Naive thymus-derived CD4-positive, alpha-beta T cell (primary cell): ENCODE measurements at regions of chr17 and their contacts with region 1.

Region 1: DNA sequence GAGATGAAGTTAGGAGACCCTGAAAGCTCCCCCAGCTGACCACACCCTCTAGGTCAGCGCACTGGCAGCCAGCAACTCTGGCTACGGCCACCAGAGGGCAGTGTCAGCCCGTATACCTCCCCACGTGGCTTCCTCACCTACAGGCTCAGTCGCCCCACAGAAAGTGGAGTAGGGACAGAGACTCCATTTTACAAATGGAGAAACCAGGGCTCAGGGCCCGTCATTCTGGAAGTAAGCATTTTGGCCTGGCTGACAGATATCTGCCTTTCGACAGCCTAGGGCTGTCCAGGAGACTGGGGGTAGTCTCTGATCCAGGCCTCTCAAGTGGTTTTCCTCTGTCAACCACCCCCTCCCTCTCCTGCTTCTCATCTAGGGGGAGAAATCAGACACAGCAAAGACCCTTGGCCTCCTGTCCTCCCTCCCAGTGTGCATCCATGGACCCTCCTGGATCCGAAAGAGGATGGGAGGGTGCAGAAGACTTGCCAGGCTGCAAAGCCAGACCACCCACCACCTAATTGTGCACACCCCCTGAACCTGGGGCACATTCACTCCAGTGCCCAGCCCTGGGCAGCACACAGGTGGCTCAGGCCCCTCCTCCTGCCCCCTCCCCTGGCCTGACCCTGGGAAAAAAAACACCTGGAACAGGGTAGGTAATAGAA is 3.8 kb upstream of the HAP1 start:
- DNase-seq: peak; percentile 61 to 83 (median 74)
- ATAC-seq: peak; percentile 97
- H3K4me3 ChIP-seq: no peak overlapping the region
- H3K4me3 Mint-ChIP-seq: no peak overlapping the region
- H3K27ac ChIP-seq: no peak overlapping the region
- H3K27ac Mint-ChIP-seq: peak overlapping the region in 1 of 9 donors; percentile 39
- H3K4me1 ChIP-seq: peaks cover 0 to 13% of the 10 kb centered on the region in 2 donors
- H3K4me1 Mint-ChIP-seq: peaks cover 4 to 12% (median 7%) of the 10 kb centered on the region in 7 donors
- H3K27me3 ChIP-seq: peaks cover 3 to 7% of the 10 kb centered on the region in 2 donors
- H3K27me3 Mint-ChIP-seq: peaks cover 32 to 38% (median 38%) of the 10 kb centered on the region in 5 donors

Region 2: GRCh38 chr17:41786227-41787020 is 48.2 kb after region 1 on chr17 and contains the start of gene JUP:
- CTCF ChIA-PET with region 1: interaction called, 6 read pairs
- POLR2A ChIA-PET with region 1: no interaction called
- intact Hi-C with region 1: loop called (anchors 1 kb)
- DNase-seq: peak; percentile 84 to 91 (median 89)
- ATAC-seq: peak; percentile 97
- H3K4me3 ChIP-seq: peak within 1 kb of the TSS; percentile 44
- H3K4me3 Mint-ChIP-seq: peak within 1 kb of the TSS; percentile 61 to 85 (median 82)
- H3K27ac ChIP-seq: no peak within 1 kb of the TSS
- H3K27ac Mint-ChIP-seq: peak within 1 kb of the TSS in 4 of 9 donors; percentile 1 to 70 (median 48)
- H3K4me1 ChIP-seq: peaks cover 0 to 11% of the 10 kb centered on the region in 2 donors
- H3K4me1 Mint-ChIP-seq: peaks cover 13 to 45% (median 30%) of the 10 kb centered on the region in 7 donors
- H3K27me3 ChIP-seq: peaks cover 0 to 6% of the 10 kb centered on the region in 2 donors
- H3K27me3 Mint-ChIP-seq: peaks cover 16 to 51% (median 20%) of the 10 kb centered on the region in 5 donors
- total RNA-seq, gene JUP: 0.24 to 8.2 (median 0.57) TPM

Region 3: GRCh38 chr17:41801374-41802271 is 63.4 kb after region 1 on chr17:
- CTCF ChIA-PET with region 1: interaction called, 17 read pairs
- POLR2A ChIA-PET with region 1: no interaction called
- intact Hi-C with region 1: loop called in 1 of 2 experiments (anchors 1 kb)
- DNase-seq: peak; percentile 45 to 78 (median 68)
- ATAC-seq: peak; percentile 91
- H3K4me3 ChIP-seq: no peak overlapping the region
- H3K4me3 Mint-ChIP-seq: no peak overlapping the region
- H3K27ac ChIP-seq: no peak overlapping the region
- H3K27ac Mint-ChIP-seq: no peak overlapping the region
- H3K4me1 ChIP-seq: peaks cover 0 to 3% of the 10 kb centered on the region in 2 donors
- H3K4me1 Mint-ChIP-seq: peaks cover 4 to 14% (median 5%) of the 10 kb centered on the region in 7 donors
- H3K27me3 ChIP-seq: no peaks in the 10 kb centered on the region
- H3K27me3 Mint-ChIP-seq: no peaks in the 10 kb centered on the region

Region 4: DNA sequence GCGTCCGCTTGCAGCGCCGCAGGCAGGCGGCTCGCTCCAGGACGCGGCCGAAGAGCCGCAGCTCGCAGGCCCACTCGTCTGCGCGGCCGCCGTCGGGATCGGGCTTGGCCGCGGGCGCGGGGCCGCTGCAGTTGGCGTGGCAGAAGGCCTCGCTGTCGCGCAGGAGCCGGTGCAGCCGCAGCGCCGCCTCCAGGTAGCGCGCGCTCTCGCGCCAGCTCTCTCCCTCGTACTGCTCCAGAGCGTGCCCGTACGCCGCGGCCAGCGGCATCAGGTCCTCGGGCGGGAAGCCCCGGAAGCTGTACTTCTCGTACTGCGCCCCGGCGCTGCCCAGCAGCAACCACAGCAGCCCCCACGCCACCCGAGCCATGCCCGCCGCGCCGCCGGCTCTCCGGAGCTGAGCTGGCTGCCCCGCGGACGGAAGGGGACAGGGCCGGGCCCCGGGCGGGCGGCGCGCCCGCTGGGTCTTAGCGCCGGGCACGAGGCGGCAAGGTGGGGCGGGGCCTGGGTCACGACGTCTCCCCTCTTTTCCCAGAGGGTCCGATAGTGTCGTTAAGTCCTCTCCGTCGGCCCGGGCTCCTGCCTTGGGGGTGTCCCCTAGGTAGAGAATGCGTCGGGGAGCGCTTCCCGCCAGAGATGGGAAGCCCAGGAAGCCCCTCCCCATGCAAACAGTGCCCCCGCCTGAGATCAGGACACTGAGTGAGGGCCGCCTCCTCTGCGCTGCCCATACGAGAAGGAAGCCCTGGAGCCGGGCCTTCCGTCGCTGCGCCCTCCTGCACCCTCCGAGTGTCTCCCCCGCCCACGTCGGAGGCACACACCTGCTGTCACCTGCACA is 73.6 kb after region 1 on chr17 and contains the start of gene P3H4:
- CTCF ChIA-PET with region 1: interaction called, 6 read pairs
- POLR2A ChIA-PET with region 1: no interaction called
- intact Hi-C with region 1: loop called in 1 of 2 experiments (anchors 2 kb)
- DNase-seq: peak; percentile 68 to 83 (median 79)
- ATAC-seq: peak; percentile 94
- H3K4me3 ChIP-seq: peak within 1 kb of the TSS; percentile 81
- H3K4me3 Mint-ChIP-seq: peak within 1 kb of the TSS; percentile 89 to 99 (median 94)
- H3K27ac ChIP-seq: peak within 1 kb of the TSS; percentile 48
- H3K27ac Mint-ChIP-seq: peak within 1 kb of the TSS in 7 of 9 donors; percentile 50 to 81 (median 68)
- H3K4me1 ChIP-seq: peaks cover 10 to 16% of the 10 kb centered on the region in 2 donors
- H3K4me1 Mint-ChIP-seq: peaks cover 14 to 26% (median 21%) of the 10 kb centered on the region in 7 donors
- H3K27me3 ChIP-seq: no peaks in the 10 kb centered on the region
- H3K27me3 Mint-ChIP-seq: peaks cover 0 to 22% (median 0%) of the 10 kb centered on the region in 5 donors
- total RNA-seq, gene P3H4: 3.6 to 7.0 (median 5.3) TPM

Region 5: GRCh38 chr17:41885733-41886132 is 147.5 kb after region 1 on chr17:
- CTCF ChIA-PET with region 1: no interaction called
- POLR2A ChIA-PET with region 1: no interaction called
- intact Hi-C with region 1: loop called in 1 of 2 experiments (anchors 1 kb)
- DNase-seq: no peak
- ATAC-seq: no peak
- H3K4me3 ChIP-seq: no peak overlapping the region
- H3K4me3 Mint-ChIP-seq: no peak overlapping the region
- H3K27ac ChIP-seq: no peak overlapping the region
- H3K27ac Mint-ChIP-seq: peak overlapping the region in 2 of 9 donors; percentile 51
- H3K4me1 ChIP-seq: no peaks in the 10 kb centered on the region
- H3K4me1 Mint-ChIP-seq: peaks cover 0 to 4% (median 0%) of the 10 kb centered on the region in 7 donors
- H3K27me3 ChIP-seq: no peaks in the 10 kb centered on the region
- H3K27me3 Mint-ChIP-seq: no peaks in the 10 kb centered on the region